ENCODE measurements at regions of chr5 and their contacts with region 1.

Region 1: DNA sequence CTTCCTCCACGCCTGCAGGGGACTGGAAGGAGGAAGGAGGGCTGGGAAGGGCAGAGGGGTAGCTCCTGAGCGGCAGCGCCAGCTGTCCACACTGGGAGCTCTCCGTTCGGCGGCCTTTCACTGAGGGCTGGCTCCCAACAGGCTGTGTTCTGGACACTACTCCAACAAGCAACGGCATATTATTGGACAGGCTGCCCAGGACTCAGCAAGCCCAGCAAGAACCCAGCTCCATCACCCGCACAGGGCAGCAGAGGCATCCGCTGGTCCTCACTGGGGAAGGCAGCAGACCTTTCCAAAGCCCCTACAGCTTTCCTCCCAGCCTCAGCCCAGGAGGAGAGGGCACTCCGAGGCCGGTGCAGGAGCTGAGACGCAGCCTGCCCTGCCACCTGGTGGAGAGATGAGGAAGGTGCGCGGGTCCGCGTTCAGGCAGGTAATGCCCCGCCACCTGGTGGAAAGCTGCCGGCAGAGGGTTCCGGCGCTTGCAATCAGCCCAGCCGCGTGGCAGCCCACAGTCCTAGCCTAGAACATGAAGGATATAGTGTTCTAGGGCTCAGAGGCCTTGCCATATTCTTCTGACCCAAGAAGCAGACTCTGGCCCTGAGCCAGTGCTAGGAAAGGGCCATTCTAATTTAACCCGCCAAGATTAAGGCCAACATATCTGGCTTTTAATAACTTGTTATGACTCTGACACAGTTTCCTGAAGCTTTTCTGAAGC is 74.4 kb downstream of the NRG2 start:
- DNase-seq: peak; percentile 78 to 87 (median 84)
- H3K4me3 ChIP-seq: no peak overlapping the region
- H3K27ac ChIP-seq: no peak overlapping the region
- H3K4me1 ChIP-seq: peaks cover 0 to 2% (median 0%) of the 10 kb centered on the region in 4 experiments
- H3K27me3 ChIP-seq: peaks cover 0 to 27% (median 2%) of the 10 kb centered on the region in 5 experiments

Region 2: GRCh38 chr5:139787568-139788293 is 181.0 kb before region 1 on chr5:
- CTCF ChIA-PET with region 1: interaction called, 155 read pairs
- POLR2A ChIA-PET with region 1: no interaction called
- DNase-seq: peak; percentile 69 to 78 (median 71)
- H3K4me3 ChIP-seq: peak overlapping the region; percentile 49 to 87 (median 73)
- H3K27ac ChIP-seq: no peak overlapping the region
- H3K4me1 ChIP-seq: peaks cover 0 to 9% (median 8%) of the 10 kb centered on the region in 4 experiments
- H3K27me3 ChIP-seq: peaks cover 0 to 18% (median 4%) of the 10 kb centered on the region in 5 experiments

Region 3: DNA sequence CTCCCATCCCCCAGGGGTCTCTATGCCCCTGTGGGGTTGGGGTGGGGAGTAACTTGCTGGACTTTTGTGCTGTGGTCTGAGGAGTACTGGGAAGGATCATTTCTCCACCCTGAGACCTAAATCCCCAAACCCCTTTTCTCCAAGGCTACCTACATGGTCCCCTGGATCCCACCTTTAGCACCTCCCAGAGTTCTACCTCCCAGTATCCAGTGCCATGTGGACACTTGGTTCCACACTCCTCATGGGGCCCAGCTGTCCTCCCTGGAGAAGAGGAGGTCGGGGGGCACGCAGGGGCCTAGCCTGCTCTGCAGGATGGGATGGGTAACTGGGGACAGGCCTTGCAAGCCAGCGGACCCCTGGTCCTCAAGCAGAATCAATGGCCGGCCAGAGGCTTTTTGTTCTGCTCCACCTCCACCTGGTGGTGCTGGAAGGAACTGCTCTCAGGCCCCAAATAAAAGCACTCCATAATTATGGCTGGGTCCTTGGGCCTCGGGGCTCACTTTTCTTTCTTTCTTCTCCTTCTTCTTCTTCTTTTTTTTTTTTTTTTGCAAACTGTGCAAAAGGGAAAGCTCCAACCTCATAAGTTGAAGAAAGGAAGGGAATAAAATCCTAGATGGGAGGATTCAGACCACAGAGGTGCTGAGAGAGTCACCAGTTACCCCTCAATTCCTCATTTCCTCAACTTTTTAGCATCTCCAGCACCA is 104.7 kb before region 1 on chr5:
- CTCF ChIA-PET with region 1: interaction called, 10 read pairs
- POLR2A ChIA-PET with region 1: no interaction called
- DNase-seq: peak; percentile 41 to 68 (median 54)
- H3K4me3 ChIP-seq: no peak overlapping the region
- H3K27ac ChIP-seq: no peak overlapping the region
- H3K4me1 ChIP-seq: no peaks in the 10 kb centered on the region
- H3K27me3 ChIP-seq: peaks cover 0 to 19% (median 0%) of the 10 kb centered on the region in 5 experiments

Region 4: DNA sequence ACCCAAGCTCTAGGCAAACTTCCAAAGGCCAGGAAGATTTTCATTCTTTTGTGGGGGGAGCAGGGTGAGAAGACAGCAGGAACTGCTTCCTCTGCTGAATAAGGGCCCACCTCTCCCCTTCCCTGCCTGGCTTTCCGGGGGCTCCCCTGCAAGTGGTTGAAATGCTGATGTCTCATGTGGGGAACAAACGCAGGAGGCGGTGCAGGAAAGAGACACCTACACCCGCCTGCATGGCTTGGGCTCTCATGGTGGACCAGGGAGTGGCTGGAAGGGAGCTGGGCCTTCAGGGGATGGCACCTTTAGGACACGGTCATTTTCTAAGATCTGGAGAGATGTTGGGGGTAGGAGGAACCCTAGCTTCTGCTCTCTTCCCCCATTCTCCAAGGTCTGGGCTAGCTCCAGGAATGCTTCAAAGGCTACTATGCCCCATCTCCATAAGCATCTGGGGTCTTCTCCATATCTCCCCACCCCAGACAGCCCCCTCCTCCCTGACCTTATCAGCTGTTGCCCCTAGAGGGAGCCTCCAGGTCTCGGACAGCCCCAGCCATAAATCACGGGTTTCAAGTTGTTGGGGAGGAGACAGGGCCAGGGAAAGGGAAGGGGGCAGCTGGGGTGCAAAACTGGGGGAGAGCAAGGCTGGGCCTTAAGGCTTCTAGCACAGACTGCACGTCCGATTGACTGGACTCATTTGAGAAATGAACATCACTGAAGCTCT is 96.5 kb before region 1 on chr5:
- CTCF ChIA-PET with region 1: interaction called, 11 read pairs
- POLR2A ChIA-PET with region 1: no interaction called
- DNase-seq: no peak
- H3K4me3 ChIP-seq: no peak overlapping the region
- H3K27ac ChIP-seq: no peak overlapping the region
- H3K4me1 ChIP-seq: peaks cover 0 to 7% (median 3%) of the 10 kb centered on the region in 4 experiments
- H3K27me3 ChIP-seq: peaks cover 0 to 5% (median 0%) of the 10 kb centered on the region in 5 experiments

Region 5: DNA sequence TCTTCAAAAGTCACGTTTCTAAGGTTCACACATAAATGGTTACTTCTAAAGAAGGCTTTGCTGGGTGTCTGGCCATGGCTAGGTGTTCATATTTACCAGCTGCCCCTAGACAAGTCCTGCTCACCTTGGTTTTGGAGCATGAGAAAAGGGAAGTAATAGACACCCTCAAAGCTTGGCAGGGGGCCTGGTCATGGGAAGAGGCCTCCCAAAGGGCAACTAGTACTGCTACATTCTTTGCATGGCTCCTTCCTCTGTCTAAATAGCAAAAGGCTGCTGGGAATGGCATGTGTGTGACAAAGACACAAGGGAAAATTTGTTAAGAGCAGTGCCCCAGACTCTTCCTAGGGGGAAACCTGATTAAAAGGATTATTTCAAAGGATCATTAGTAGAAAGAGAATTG is 19.0 kb before region 1 on chr5:
- CTCF ChIA-PET with region 1: interaction called, 42 read pairs
- POLR2A ChIA-PET with region 1: interaction called, 3 read pairs
- DNase-seq: peak in 1 of 3 donors; percentile 6
- H3K4me3 ChIP-seq: no peak overlapping the region
- H3K27ac ChIP-seq: no peak overlapping the region
- H3K4me1 ChIP-seq: no peaks in the 10 kb centered on the region
- H3K27me3 ChIP-seq: peaks cover 0 to 3% (median 0%) of the 10 kb centered on the region in 5 experiments

Region 6: GRCh38 chr5:139985733-139986132 is 17.0 kb after region 1 on chr5:
- CTCF ChIA-PET with region 1: interaction called, 17 read pairs
- POLR2A ChIA-PET with region 1: no interaction called
- DNase-seq: peak in 1 of 3 donors; percentile 13
- H3K4me3 ChIP-seq: no peak overlapping the region
- H3K27ac ChIP-seq: no peak overlapping the region
- H3K4me1 ChIP-seq: no peaks in the 10 kb centered on the region
- H3K27me3 ChIP-seq: peaks cover 0 to 15% (median 5%) of the 10 kb centered on the region in 5 experiments

Region 7: GRCh38 chr5:140000332-140000731 is 31.6 kb after region 1 on chr5:
- CTCF ChIA-PET with region 1: interaction called, 11 read pairs
- POLR2A ChIA-PET with region 1: no interaction called
- DNase-seq: no peak
- H3K4me3 ChIP-seq: no peak overlapping the region
- H3K27ac ChIP-seq: no peak overlapping the region
- H3K4me1 ChIP-seq: no peaks in the 10 kb centered on the region
- H3K27me3 ChIP-seq: peaks cover 2 to 35% (median 21%) of the 10 kb centered on the region in 5 experiments

Measured in common myeloid progenitor, CD34-positive (primary cell).